CD4-positive, alpha-beta T cell (primary cell): ENCODE measurements at regions of chr16 and their contacts with region 1.

Region 1: GRCh38 chr16:53968454-53968853 is 264.5 kb downstream of the FTO start:
- DNase-seq: no peak
- ATAC-seq: no peak
- H3K4me3 ChIP-seq: no peak overlapping the region
- H3K4me3 Mint-ChIP-seq: no peak overlapping the region
- H3K27ac ChIP-seq: no peak overlapping the region
- H3K27ac Mint-ChIP-seq: no peak overlapping the region
- H3K4me1 ChIP-seq: no peaks in the 10 kb centered on the region
- H3K4me1 Mint-ChIP-seq: no peaks in the 10 kb centered on the region
- H3K27me3 ChIP-seq: no peaks in the 10 kb centered on the region
- H3K27me3 Mint-ChIP-seq: no peaks in the 10 kb centered on the region
- CTCF ChIP-seq: no peak

Region 2: GRCh38 chr16:54118846-54119245 is 150.4 kb after region 1 on chr16:
- CTCF ChIA-PET with region 1: no interaction called
- POLR2A ChIA-PET with region 1: no interaction called
- intact Hi-C with region 1: no loop called
- DNase-seq: no peak
- ATAC-seq: no peak
- H3K4me3 ChIP-seq: no peak overlapping the region
- H3K4me3 Mint-ChIP-seq: no peak overlapping the region
- H3K27ac ChIP-seq: no peak overlapping the region
- H3K27ac Mint-ChIP-seq: no peak overlapping the region
- H3K4me1 ChIP-seq: no peaks in the 10 kb centered on the region
- H3K4me1 Mint-ChIP-seq: no peaks in the 10 kb centered on the region
- H3K27me3 ChIP-seq: no peaks in the 10 kb centered on the region
- H3K27me3 Mint-ChIP-seq: no peaks in the 10 kb centered on the region
- CTCF ChIP-seq: no peak

Region 3: GRCh38 chr16:54253118-54253517 is 284.7 kb after region 1 on chr16:
- CTCF ChIA-PET with region 1: no interaction called
- POLR2A ChIA-PET with region 1: no interaction called
- intact Hi-C with region 1: no loop called
- DNase-seq: no peak
- ATAC-seq: no peak
- H3K4me3 ChIP-seq: no peak overlapping the region
- H3K4me3 Mint-ChIP-seq: no peak overlapping the region
- H3K27ac ChIP-seq: no peak overlapping the region
- H3K27ac Mint-ChIP-seq: no peak overlapping the region
- H3K4me1 ChIP-seq: no peaks in the 10 kb centered on the region
- H3K4me1 Mint-ChIP-seq: no peaks in the 10 kb centered on the region
- H3K27me3 ChIP-seq: peaks cover 0 to 4% of the 10 kb centered on the region in 2 experiments
- H3K27me3 Mint-ChIP-seq: peaks cover 5% of the 10 kb centered on the region
- CTCF ChIP-seq: no peak

Region 4: DNA sequence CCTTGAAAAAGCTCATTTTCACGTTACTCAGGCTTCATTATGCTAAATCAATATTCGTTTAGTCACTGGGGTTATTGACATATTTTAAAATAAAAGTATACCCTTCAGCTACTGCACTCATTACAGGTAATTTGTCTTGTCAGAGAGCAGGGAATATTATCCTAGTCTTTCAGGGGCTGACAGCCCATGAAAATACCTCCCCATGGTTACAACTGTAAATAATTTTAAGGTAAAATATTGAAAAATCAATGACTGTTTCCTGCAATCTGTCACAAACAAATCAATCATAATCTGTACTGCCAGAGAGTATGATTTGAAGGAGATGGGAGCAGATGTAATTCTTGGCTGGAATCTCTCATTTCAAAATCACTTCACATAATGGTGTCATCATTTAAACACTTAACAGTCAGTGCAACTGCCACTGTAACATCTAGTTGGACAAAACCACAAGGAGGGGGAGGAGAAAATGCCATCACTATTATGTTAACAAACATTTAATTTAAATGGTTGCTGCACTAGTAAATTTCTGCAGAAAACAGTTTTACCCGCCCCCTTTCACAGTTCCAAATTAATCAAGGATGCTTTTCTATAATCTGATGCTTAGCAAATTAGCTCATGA is 952.9 kb after region 1 on chr16:
- CTCF ChIA-PET with region 1: no interaction called
- POLR2A ChIA-PET with region 1: no interaction called
- intact Hi-C with region 1: loop called in 1 of 2 experiments (anchors 5 kb)
- DNase-seq: no peak
- ATAC-seq: no peak
- H3K4me3 ChIP-seq: no peak overlapping the region
- H3K4me3 Mint-ChIP-seq: no peak overlapping the region
- H3K27ac ChIP-seq: no peak overlapping the region
- H3K27ac Mint-ChIP-seq: no peak overlapping the region
- H3K4me1 ChIP-seq: no peaks in the 10 kb centered on the region
- H3K4me1 Mint-ChIP-seq: no peaks in the 10 kb centered on the region
- H3K27me3 ChIP-seq: peaks cover 9 to 46% of the 10 kb centered on the region in 2 experiments
- H3K27me3 Mint-ChIP-seq: peaks cover 50% of the 10 kb centered on the region
- CTCF ChIP-seq: no peak